ENCODE measurements at regions of chr11 and their contacts with region 1.

Region 1: DNA sequence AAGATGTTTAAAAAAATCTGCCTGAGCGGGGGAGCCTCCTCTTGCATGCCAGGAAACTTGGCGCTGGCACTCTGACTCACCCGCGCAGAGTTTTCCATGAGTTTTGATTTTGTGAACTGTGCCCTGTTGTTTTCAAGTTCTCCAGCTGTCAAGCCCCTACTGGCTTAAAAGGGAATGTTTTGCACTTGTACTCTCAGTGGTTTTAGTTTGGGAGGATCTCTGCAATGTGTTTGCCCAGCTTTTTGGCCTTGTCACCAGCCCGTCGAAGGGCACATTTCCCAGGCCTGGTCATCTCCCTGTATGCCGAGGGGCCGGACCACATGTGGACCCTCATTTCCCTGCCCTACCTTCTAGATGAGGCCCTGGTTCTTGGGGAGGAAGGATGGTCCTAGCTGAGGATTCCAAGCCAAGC is 12.2 kb downstream of the MRGPRF start:
- DNase-seq: peak; percentile 53
- H3K4me3 ChIP-seq: no peak overlapping the region
- H3K27ac ChIP-seq: peak overlapping the region; percentile 20 to 70
- H3K4me1 ChIP-seq: peaks cover 14% of the 10 kb centered on the region
- H3K27me3 ChIP-seq: no peaks in the 10 kb centered on the region
- CTCF ChIP-seq: peak; percentile 56 to 73 (median 66)
- POLR2A ChIP-seq: no peak

Region 2: GRCh38 chr11:68903288-68904247 is 97.3 kb before region 1 on chr11 and contains the starts of genes IGHMBP2 and MRPL21:
- intact Hi-C with region 1: loop called (anchors 10 kb)
- DNase-seq: peak; percentile 89
- H3K4me3 ChIP-seq: peak within 1 kb of the TSS; percentile 82 to 90
- H3K27ac ChIP-seq: peak within 1 kb of the TSS; percentile 60 to 85
- H3K4me1 ChIP-seq: peaks cover 15% of the 10 kb centered on the region
- H3K27me3 ChIP-seq: no peaks in the 10 kb centered on the region
- CTCF ChIP-seq: no peak
- POLR2A ChIP-seq: no peak
- total RNA-seq, gene IGHMBP2: 42.6 to 47.1 TPM
- total RNA-seq, gene MRPL21: 43.2 to 45.0 TPM